PC-9 (cell line): ENCODE measurements at regions of chr2 and their contacts with region 1.

Region 1: GRCh38 chr2:235779444-235779896 is 285.6 kb downstream of the AGAP1 start:
- DNase-seq: peak; percentile 66 to 87
- H3K4me3 ChIP-seq: no peak overlapping the region
- H3K27ac ChIP-seq: no peak overlapping the region
- H3K4me1 ChIP-seq: no peaks in the 10 kb centered on the region
- H3K27me3 ChIP-seq: no peaks in the 10 kb centered on the region
- CTCF ChIP-seq: peak; percentile 93

Region 2: GRCh38 chr2:235675678-235676535 is 103.6 kb before region 1 on chr2:
- CTCF ChIA-PET with region 1: no interaction called
- POLR2A ChIA-PET with region 1: no interaction called
- intact Hi-C with region 1: no loop called
- DNase-seq: peak in 1 of 2 experiments; percentile 65
- H3K4me3 ChIP-seq: no peak overlapping the region; the same call in 1 of the 2 replicates
- H3K27ac ChIP-seq: peak overlapping the region; percentile 66
- H3K4me1 ChIP-seq: peaks cover 75% of the 10 kb centered on the region
- H3K27me3 ChIP-seq: no peaks in the 10 kb centered on the region
- CTCF ChIP-seq: peak; percentile 56; the same call in 1 of the 2 replicates

Region 3: DNA sequence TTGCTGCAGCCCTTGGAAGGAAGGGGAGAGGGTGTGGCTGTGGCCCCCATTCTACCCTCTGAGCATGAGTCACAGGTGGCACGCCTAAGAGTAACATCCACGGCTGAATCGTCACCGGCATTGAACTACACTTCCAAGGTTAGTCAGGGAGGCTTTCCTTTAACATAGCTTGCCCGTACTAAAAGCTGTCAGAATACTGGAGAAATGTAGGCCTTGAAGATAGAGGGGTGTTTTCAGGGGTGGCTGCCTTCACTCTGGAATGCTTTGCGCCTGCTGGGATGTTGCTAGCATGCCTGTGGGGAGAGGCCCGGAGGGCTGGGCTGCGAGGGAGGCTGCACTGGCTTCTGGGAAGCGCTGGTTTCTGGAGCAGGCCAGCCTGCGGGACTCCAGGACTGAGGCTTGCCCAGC is 48.1 kb after region 1 on chr2:
- CTCF ChIA-PET with region 1: no interaction called
- POLR2A ChIA-PET with region 1: no interaction called
- intact Hi-C with region 1: no loop called
- DNase-seq: peak; percentile 83 to 87
- H3K4me3 ChIP-seq: no peak overlapping the region
- H3K27ac ChIP-seq: peak overlapping the region; percentile 41
- H3K4me1 ChIP-seq: peaks cover 17% of the 10 kb centered on the region
- H3K27me3 ChIP-seq: no peaks in the 10 kb centered on the region
- CTCF ChIP-seq: no peak

Region 4: DNA sequence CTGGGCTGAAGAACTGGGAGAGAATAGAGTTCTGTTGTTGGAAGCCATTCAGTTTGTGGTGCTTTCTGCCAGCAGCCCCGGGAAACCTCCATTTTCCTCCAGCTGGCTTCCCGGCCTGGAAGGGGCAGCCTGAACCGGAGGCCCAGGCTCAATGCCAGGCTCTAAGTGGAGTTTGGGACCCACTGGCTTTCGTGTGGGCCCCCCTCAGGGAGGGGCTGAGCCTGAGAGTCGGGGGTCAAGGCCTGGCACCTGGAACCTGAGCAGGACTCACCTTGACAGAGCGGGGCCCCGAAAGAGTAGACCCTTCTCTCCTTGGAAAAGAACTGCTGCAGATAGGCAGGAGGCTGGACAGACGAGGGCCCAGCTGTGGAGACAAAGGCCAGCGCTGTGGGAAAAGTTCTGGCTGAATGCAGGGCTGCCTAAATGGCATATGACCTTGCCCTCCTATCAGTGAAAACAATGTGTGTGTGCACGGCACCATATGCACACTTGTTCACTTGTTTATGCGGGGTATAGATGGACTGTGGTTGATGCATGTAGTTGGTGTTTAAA is 519.5 kb after region 1 on chr2:
- CTCF ChIA-PET with region 1: interaction called, 16 read pairs
- POLR2A ChIA-PET with region 1: no interaction called
- intact Hi-C with region 1: no loop called
- DNase-seq: no peak
- H3K4me3 ChIP-seq: no peak overlapping the region
- H3K27ac ChIP-seq: no peak overlapping the region
- H3K4me1 ChIP-seq: no peaks in the 10 kb centered on the region
- H3K27me3 ChIP-seq: peaks cover 70% of the 10 kb centered on the region
- CTCF ChIP-seq: no peak

Region 5: DNA sequence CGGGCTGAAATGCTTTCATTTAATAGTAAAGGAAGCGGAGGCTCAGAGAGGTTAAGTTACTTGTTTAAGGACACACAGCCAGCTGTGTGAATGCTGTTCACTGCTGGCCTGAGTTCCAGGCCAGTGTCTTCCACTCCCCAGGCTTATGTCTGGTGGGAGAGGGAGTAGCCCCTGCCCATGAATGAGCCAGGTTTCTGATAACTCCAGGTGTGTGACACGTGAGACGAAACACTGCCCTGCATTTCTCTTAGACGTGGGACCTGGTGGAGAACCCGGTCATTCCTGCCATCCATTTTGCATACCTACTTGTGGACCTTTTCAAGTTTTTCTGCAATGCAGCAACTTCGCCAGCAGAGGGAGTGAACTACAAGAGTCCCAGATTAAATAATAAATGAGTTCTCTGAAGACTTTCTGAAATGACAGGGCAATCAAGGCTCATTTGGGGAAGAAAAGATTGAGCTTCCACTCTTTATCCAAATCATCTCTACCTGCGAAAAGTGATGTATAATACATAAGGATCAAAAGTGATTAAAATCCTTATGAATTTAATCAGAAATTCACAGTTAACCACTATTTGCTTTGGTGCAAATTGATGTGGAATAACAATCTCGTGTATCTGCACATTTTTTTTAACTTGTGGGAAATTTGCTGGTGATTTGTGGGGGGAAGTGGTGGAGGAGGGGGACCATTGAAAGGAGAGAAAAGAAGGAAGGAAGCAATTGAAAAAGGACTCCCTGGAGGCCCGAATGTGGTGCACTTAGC is 564.1 kb after region 1 on chr2:
- CTCF ChIA-PET with region 1: no interaction called
- POLR2A ChIA-PET with region 1: no interaction called
- intact Hi-C with region 1: loop called (anchors 10 kb)
- DNase-seq: peak; percentile 60 to 65
- H3K4me3 ChIP-seq: no peak overlapping the region
- H3K27ac ChIP-seq: no peak overlapping the region
- H3K4me1 ChIP-seq: no peaks in the 10 kb centered on the region
- H3K27me3 ChIP-seq: peaks cover 84% of the 10 kb centered on the region
- CTCF ChIP-seq: peak; percentile 95

Region 6: GRCh38 chr2:236526455-236527158 is 747.1 kb after region 1 on chr2:
- CTCF ChIA-PET with region 1: interaction called, 11 read pairs
- POLR2A ChIA-PET with region 1: no interaction called
- intact Hi-C with region 1: no loop called
- DNase-seq: no peak
- H3K4me3 ChIP-seq: no peak overlapping the region
- H3K27ac ChIP-seq: no peak overlapping the region
- H3K4me1 ChIP-seq: no peaks in the 10 kb centered on the region
- H3K27me3 ChIP-seq: peaks cover 42% of the 10 kb centered on the region
- CTCF ChIP-seq: no peak